ENCODE measurements at regions of chr6 and their contacts with region 1.

Region 1: GRCh38 chr6:140078561-140079125 is 704.2 kb upstream of the CITED2 start:
- DNase-seq: peak in 1 of 2 donors; percentile 51
- ATAC-seq: peak; percentile 45 to 83 (median 60)
- H3K4me3 ChIP-seq: peak overlapping the region in 2 of 10 donors; percentile 3 to 12
- H3K27ac ChIP-seq: peak overlapping the region; percentile 71 to 89 (median 82)
- H3K4me1 ChIP-seq: peaks cover 0 to 36% (median 22%) of the 10 kb centered on the region in 9 donors
- H3K27me3 ChIP-seq: no peaks in the 10 kb centered on the region
- CTCF ChIP-seq: no peak

Region 2: GRCh38 chr6:139881728-139882211 is 196.9 kb before region 1 on chr6:
- intact Hi-C with region 1: loop called in 1 of 10 experiments (anchors 10 kb)
- DNase-seq: peak in 1 of 2 donors; percentile 15
- ATAC-seq: peak; percentile 30 to 80 (median 70)
- H3K4me3 ChIP-seq: peak overlapping the region in 1 of 10 donors; percentile 14
- H3K27ac ChIP-seq: peak overlapping the region in 8 of 10 donors; percentile 7 to 87 (median 60)
- H3K4me1 ChIP-seq: peaks cover 7 to 47% (median 20%) of the 10 kb centered on the region in 9 donors
- H3K27me3 ChIP-seq: no peaks in the 10 kb centered on the region
- CTCF ChIP-seq: peak; percentile 53 to 71 (median 60)

Region 3: DNA sequence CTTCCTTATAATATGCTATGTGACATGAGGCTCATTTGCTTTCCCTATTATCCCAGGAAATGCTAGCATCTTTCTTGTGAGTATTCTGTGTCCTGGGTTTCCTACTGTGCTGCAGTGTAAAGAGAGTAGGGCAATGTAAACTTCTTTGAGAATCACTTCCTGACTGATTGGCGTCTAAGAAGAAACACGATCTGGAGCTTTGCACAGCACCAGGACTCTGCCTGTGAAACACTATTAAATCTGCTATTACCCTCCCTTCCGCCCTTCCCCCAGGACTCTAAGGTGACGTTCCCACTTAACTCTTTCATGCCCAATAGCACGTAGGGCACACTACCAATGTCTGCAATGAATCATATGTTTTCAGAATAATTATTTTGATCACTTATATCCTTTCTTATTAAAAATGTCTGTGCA is 96.9 kb before region 1 on chr6:
- intact Hi-C with region 1: loop called in 3 of 10 experiments (anchors 5 to 10 kb)
- DNase-seq: peak in 1 of 2 donors; percentile 40
- ATAC-seq: peak; percentile 41 to 74 (median 59)
- H3K4me3 ChIP-seq: peak overlapping the region in 1 of 10 donors; percentile 1
- H3K27ac ChIP-seq: peak overlapping the region in 8 of 10 donors; percentile 0 to 71 (median 50)
- H3K4me1 ChIP-seq: peaks cover 0 to 56% (median 42%) of the 10 kb centered on the region in 9 donors
- H3K27me3 ChIP-seq: no peaks in the 10 kb centered on the region
- CTCF ChIP-seq: no peak

Region 4: GRCh38 chr6:140011537-140011936 is 67.1 kb before region 1 on chr6:
- intact Hi-C with region 1: no loop called
- DNase-seq: no peak
- ATAC-seq: peak; percentile 37 to 81 (median 58)
- H3K4me3 ChIP-seq: no peak overlapping the region
- H3K27ac ChIP-seq: peak overlapping the region; percentile 17 to 75 (median 60)
- H3K4me1 ChIP-seq: peaks cover 0 to 18% (median 9%) of the 10 kb centered on the region in 9 donors
- H3K27me3 ChIP-seq: no peaks in the 10 kb centered on the region
- CTCF ChIP-seq: peak in 2 of 9 donors; percentile 4 to 22

Region 5: GRCh38 chr6:140346461-140346860 is 267.8 kb after region 1 on chr6:
- intact Hi-C with region 1: loop called in 1 of 10 experiments (anchors 5 kb)
- DNase-seq: peak in 1 of 2 donors; percentile 6
- ATAC-seq: peak in 7 of 8 donors; percentile 33 to 85 (median 69)
- H3K4me3 ChIP-seq: no peak overlapping the region
- H3K27ac ChIP-seq: peak overlapping the region in 8 of 10 donors; percentile 33 to 72 (median 49)
- H3K4me1 ChIP-seq: peaks cover 3 to 34% (median 9%) of the 10 kb centered on the region in 9 donors
- H3K27me3 ChIP-seq: no peaks in the 10 kb centered on the region
- CTCF ChIP-seq: no peak

Region 6: DNA sequence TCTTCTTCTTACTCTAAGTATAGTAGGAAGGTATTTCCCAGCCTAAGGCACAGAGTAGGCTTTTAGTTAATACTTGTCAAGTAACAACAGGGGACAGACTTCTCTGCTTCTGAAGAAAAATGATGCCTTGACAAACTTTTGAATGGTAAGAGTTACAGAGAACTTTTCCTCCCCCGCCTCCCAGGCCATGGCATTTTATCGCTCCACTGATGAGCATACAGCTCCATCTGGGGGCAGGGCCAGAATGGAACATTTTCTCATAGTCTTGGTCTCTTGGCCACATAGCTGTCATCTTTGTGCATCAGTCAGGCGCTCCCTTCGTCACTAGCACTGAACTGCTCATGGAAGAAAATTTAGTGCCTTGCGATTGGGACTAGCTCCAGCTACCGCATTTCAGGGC is 362.6 kb after region 1 on chr6:
- intact Hi-C with region 1: loop called in 2 of 10 experiments (anchors 2 to 10 kb)
- DNase-seq: peak; percentile 32 to 79
- ATAC-seq: peak; percentile 91 to 98 (median 94)
- H3K4me3 ChIP-seq: no peak overlapping the region
- H3K27ac ChIP-seq: peak overlapping the region in 6 of 10 donors; percentile 19 to 62 (median 48)
- H3K4me1 ChIP-seq: peaks cover 0 to 44% (median 16%) of the 10 kb centered on the region in 9 donors
- H3K27me3 ChIP-seq: no peaks in the 10 kb centered on the region
- CTCF ChIP-seq: peak; percentile 22 to 75 (median 61)

Region 7: DNA sequence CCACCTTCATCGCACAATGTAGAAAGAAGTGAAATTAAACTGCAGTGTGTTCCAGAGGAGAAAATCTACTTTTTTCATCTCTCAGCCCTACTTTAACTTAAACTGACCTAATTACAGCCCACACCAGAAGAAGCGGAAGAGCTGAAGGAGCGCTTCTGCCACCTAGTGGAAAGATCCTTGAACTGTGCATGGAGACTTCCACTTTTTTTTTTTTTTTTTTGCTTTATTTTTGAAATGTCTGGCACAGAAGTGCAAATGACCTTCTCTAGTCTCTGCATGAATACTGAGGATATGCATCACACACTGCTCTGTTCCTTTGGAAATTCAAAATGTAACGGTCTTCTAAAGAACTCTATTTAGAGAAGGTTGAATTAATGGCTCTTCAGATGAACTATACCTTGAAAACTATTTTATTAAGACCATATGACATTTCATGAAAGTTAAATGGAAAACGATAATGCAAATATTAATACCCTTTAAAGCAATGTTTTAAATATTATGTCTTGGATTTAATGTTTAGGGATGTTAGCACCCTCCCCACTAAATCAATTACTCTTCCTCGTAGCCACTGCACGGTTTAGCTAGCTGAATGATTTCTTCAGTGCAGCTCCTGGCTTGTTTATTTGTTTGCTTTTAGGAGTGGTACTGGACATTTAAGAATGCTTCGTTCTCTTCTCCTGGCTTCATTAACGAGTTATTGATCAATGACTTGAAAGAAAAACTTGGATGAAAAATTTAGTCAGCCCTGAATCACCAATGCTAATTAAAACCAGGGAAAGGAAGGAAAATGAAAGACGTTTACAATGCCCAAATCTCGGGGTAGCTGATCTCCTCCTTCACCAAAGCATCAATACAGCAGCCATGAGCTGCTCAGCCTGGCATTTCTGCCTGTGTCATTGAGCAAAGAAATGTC is 1484.5 kb after region 1 on chr6:
- intact Hi-C with region 1: loop called in 1 of 10 experiments (anchors 5 kb)
- DNase-seq: peak; percentile 23 to 72
- ATAC-seq: peak; percentile 89 to 96 (median 94)
- H3K4me3 ChIP-seq: peak overlapping the region; percentile 14 to 53 (median 38)
- H3K27ac ChIP-seq: peak overlapping the region; percentile 63 to 91 (median 76)
- H3K4me1 ChIP-seq: peaks cover 0 to 23% (median 9%) of the 10 kb centered on the region in 9 donors
- H3K27me3 ChIP-seq: no peaks in the 10 kb centered on the region
- CTCF ChIP-seq: peak; percentile 83 to 92 (median 88)

Measured in heart right ventricle (tissue), 16 donors.